IMR-90 (cell line): ENCODE measurements at regions of chr2 and their contacts with region 1.

Region 1: DNA sequence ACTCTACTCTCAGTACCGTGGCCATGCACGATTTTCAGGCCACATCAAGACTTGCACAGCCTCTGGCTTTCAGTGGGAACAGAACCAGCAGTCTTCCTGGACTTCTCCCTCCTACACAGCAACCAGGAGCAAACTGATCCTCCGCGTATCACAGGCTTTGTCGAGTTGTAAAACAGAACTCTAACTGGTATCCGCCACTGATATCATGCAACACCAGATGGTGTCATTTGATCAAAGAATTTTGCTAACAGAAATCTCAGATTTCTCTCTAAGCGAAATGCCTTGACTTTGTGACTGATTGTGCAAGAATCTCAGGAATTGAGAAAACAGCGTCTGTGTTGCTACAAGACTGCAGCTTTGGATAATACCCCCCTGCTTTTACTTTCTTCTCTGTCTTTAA is 85.7 kb downstream of the COPS8 start:
- DNase-seq: peak; percentile 97
- ATAC-seq: peak; percentile 92
- H3K4me3 ChIP-seq: peak overlapping the region; percentile 21; the same call in 1 of the 2 replicates
- H3K27ac ChIP-seq: peak overlapping the region; percentile 97
- H3K4me1 ChIP-seq: peaks cover 11% of the 10 kb centered on the region
- H3K27me3 ChIP-seq: no peaks in the 10 kb centered on the region
- CTCF ChIP-seq: peak; percentile 56
- POLR2A ChIP-seq: peak; percentile 42; the same call in 1 of the 2 replicates
- RAD21 ChIP-seq: peak; percentile 80

Region 2: GRCh38 chr2:236715491-236715961 is 455.9 kb before region 1 on chr2:
- CTCF ChIA-PET with region 1: no interaction called
- POLR2A ChIA-PET with region 1: no interaction called
- dilution Hi-C with region 1: no loop called
- in situ Hi-C with region 1: no loop called
- intact Hi-C with region 1: no loop called
- DNase-seq: no peak
- ATAC-seq: no peak
- H3K4me3 ChIP-seq: no peak overlapping the region
- H3K27ac ChIP-seq: no peak overlapping the region
- H3K4me1 ChIP-seq: no peaks in the 10 kb centered on the region
- H3K27me3 ChIP-seq: peaks cover 14% of the 10 kb centered on the region
- CTCF ChIP-seq: no peak
- POLR2A ChIP-seq: no peak
- RAD21 ChIP-seq: no peak

Region 3: DNA sequence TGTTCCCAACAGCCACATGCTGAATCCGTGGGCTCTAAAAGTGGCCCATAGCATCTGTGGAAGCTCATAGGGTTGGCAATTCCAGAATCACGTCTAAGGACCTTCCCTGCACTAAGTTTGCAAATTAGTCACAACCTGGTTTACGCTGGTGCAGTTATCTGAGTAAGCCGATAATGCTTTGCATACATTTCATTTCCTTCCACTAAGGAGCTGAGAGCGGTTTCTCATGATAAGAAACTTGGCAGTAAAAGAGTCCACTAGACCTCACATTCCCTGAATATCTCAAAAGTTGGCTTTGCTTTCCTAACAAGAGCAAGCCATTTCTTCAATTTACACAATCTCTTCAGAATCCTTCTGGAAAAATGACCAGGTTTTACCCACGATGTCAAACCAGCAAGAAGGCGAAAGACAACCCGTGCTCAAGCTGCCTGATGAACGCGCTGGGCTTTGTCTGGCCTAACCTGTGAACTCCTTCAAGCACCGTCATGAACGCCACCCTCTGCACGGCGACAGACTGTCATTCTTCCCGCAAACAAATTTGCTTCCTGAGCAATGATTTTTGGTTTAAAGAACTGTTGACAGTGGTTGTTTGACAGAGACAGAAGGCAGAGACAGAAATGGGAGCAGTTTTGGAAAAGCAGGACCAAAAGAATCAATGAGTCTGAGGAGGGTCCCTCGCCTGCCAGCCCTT is 158.7 kb before region 1 on chr2:
- CTCF ChIA-PET with region 1: no interaction called
- POLR2A ChIA-PET with region 1: no interaction called
- dilution Hi-C with region 1: no loop called
- in situ Hi-C with region 1: no loop called
- intact Hi-C with region 1: no loop called
- DNase-seq: peak; percentile 77
- ATAC-seq: peak; percentile 86
- H3K4me3 ChIP-seq: no peak overlapping the region
- H3K27ac ChIP-seq: no peak overlapping the region
- H3K4me1 ChIP-seq: peaks cover 2% of the 10 kb centered on the region
- H3K27me3 ChIP-seq: peaks cover 16% of the 10 kb centered on the region
- CTCF ChIP-seq: no peak
- POLR2A ChIP-seq: no peak
- RAD21 ChIP-seq: no peak

Region 4: DNA sequence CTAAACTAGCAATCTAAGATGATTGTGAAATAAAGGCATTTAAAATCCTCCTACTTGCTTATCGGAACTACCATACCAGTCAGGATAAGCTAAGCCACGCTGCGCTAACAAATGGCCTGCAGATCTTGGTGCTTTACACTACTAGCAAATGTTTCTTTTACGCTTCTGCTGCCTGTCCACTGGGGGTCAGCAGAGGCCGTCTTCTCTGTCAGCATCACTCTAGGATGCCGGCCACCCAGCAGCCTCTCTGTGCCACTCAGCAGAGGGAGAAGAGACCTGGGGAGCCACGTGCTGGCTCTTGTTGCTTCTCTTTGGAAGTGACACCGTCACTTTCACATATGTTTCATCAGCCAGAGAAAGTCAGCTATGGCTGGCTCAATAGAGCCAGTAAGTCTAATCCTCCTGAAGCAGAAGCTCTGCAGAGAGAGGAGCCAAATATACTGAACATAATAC is 49.2 kb before region 1 on chr2:
- CTCF ChIA-PET with region 1: interaction called, 4 read pairs
- POLR2A ChIA-PET with region 1: no interaction called
- dilution Hi-C with region 1: no loop called
- in situ Hi-C with region 1: no loop called
- intact Hi-C with region 1: loop called (anchors 2 kb)
- DNase-seq: peak; percentile 87
- ATAC-seq: peak; percentile 94
- H3K4me3 ChIP-seq: no peak overlapping the region
- H3K27ac ChIP-seq: peak overlapping the region; percentile 53; the same call in 1 of the 2 replicates
- H3K4me1 ChIP-seq: peaks cover 13% of the 10 kb centered on the region
- H3K27me3 ChIP-seq: no peaks in the 10 kb centered on the region
- CTCF ChIP-seq: peak; percentile 84
- POLR2A ChIP-seq: 0 out of 2 replicates have a peak, but pooled peaks have one; percentile 34
- RAD21 ChIP-seq: peak; percentile 93

Region 5: DNA sequence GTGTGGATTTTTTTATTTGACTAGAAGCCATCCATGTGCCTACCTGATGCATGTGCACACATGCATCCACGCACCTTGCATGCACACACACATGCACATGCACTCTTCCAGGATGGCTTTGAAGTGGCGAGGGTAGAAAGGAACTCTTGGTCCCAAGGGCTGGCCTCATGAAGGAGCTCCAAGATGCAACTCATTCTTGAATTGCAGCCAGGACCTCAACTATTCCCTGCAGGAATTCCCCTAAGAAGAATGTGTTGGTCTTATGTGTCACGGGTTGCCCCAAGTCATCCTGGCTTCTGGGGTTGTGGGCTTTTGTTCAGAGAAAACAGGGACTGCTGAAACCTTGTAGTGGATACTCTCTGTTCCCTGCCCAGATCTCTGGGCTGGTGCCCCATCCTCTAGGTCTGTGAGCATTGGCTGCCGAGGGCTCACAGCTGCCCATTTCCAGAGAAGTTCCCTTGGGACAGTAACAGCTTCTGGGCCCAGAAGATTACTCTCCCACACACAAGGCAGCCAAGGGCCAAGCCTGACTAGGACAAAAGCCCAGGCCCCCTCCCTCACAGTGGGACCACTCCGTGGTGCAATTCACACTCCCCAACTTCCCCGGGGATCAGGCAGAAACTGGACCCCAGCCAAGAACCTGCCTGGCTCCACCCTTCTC is 51.9 kb after region 1 on chr2:
- CTCF ChIA-PET with region 1: interaction called, 5 read pairs
- POLR2A ChIA-PET with region 1: interaction called, 4 read pairs
- dilution Hi-C with region 1: no loop called
- in situ Hi-C with region 1: no loop called
- intact Hi-C with region 1: loop called (anchors 2 kb)
- DNase-seq: peak; percentile 100
- ATAC-seq: peak; percentile 64
- H3K4me3 ChIP-seq: no peak overlapping the region
- H3K27ac ChIP-seq: peak overlapping the region; percentile 99
- H3K4me1 ChIP-seq: peaks cover 30% of the 10 kb centered on the region
- H3K27me3 ChIP-seq: no peaks in the 10 kb centered on the region
- CTCF ChIP-seq: no peak
- POLR2A ChIP-seq: peak; percentile 58; the same call in 1 of the 2 replicates
- RAD21 ChIP-seq: peak; percentile 42

Region 6: GRCh38 chr2:237322564-237322963 is 151.2 kb after region 1 on chr2:
- CTCF ChIA-PET with region 1: no interaction called
- POLR2A ChIA-PET with region 1: no interaction called
- dilution Hi-C with region 1: no loop called
- in situ Hi-C with region 1: loop called (anchors 10 kb)
- intact Hi-C with region 1: loop called (anchors 2 kb)
- DNase-seq: no peak
- ATAC-seq: no peak
- H3K4me3 ChIP-seq: no peak overlapping the region
- H3K27ac ChIP-seq: peak overlapping the region; percentile 96
- H3K4me1 ChIP-seq: peaks cover 27% of the 10 kb centered on the region
- H3K27me3 ChIP-seq: no peaks in the 10 kb centered on the region
- CTCF ChIP-seq: peak; percentile 27; the same call in 1 of the 2 replicates
- POLR2A ChIP-seq: peak; percentile 16
- RAD21 ChIP-seq: peak; percentile 24; the same call in 1 of the 2 replicates

Region 7: DNA sequence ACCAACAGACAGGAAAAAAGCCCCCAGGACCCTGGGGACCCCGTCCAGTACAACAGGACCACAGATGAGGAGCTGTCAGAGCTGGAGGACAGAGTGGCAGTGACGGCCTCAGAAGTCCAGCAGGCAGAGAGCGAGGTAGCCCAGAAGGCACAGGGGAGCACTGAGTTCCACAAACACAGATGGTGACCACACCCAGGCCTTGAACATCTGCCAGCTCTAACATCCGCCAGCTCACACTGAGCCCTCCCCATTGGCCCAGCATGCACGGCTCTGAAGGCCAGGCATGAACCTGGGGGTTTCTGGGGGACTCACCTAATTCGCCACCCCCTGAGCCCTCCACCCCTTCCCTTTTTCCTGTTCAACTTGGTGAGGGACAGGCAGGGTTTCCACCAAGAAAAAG is 369.4 kb after region 1 on chr2:
- CTCF ChIA-PET with region 1: no interaction called
- POLR2A ChIA-PET with region 1: no interaction called
- dilution Hi-C with region 1: no loop called
- in situ Hi-C with region 1: no loop called
- intact Hi-C with region 1: no loop called
- DNase-seq: peak; percentile 60
- ATAC-seq: peak; percentile 86
- H3K4me3 ChIP-seq: no peak overlapping the region
- H3K27ac ChIP-seq: no peak overlapping the region
- H3K4me1 ChIP-seq: peaks cover 4% of the 10 kb centered on the region; the same call in 1 of the 2 replicates
- H3K27me3 ChIP-seq: no peaks in the 10 kb centered on the region
- CTCF ChIP-seq: no peak
- POLR2A ChIP-seq: no peak
- RAD21 ChIP-seq: no peak